Activated CD4-positive, alpha-beta T cell treated with anti-CD3 and anti-CD28 coated beads for 36 hours (primary cell): ENCODE measurements at regions of chr10 and their contacts with region 1.

Region 1: DNA sequence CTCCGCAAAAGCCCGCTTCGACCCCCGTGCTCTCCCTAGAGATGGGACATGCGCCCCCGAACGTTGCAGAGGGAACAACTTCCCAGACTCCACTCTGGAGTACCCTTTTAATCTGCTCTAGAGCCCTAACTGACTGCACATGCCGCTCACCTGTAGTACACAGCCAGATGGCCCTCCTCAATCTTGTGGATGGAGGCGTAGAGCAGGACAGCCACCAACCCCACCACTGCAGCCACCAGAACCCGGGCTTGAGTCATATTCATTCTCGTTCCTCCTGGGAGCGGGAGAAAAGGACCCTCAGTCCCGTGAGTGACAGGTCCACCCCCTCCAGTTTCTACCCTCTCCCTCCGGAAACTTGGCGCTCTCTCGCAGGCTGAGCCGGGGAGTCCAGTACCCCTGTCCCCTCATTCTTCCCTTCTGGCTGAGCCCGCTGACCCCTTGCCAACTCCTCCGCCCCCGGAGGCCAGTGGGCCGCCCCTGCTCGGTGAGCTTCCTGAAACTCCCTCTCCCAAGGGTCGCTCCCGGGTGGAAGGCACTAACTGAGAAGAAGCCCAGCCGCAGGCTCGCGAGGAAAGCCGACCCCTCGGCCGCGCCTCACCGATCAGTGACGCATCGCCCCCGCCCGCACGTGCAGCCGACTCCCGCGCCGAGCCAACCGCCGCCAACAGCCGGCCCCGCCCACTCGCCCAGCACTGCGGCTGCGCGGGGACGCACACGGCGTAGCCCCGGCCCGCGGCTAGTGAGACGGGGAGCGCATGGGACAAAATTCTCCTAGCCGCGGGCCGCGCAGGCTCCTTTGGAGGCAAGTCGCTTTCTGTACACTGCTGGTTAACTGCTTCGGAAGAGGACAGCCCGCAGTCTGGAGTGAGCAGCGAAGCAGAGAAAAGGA is at the start of gene ERLIN1:
- DNase-seq: peak; percentile 97
- ATAC-seq: peak; percentile 90
- H3K4me3 Mint-ChIP-seq: peak within 1 kb of the TSS; percentile 97
- H3K27ac Mint-ChIP-seq: peak within 1 kb of the TSS; percentile 97
- H3K4me1 Mint-ChIP-seq: peaks cover 48% of the 10 kb centered on the region
- H3K27me3 Mint-ChIP-seq: no peaks in the 10 kb centered on the region
- total RNA-seq, gene ERLIN1: 15.2 to 18.7 TPM

Region 2: DNA sequence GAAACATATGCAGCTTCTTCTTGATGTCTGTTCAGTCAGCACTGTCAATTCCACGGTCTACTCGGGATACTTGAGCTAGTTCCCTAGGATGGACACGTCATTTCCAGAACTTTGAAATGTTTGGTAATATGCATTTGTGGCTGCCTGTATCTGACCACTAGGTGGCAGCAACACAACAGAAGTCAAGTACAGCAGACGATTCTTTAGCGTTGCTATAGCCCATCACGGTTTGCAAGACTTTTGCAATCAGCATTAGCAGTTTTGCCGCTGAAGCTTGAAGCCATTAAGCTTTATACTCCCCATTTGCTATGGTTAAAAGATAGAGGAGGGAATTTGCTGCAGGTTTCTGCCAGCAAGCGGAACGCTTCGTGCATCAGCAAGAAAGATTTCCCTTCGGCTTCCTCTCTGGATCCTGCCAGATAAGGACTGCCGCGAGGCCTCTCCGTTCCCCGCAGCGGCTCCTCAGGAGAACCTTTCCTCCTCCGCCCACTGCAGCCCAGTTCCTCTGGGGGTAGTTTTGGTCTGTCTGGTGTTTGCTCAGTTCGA is 339.7 kb before region 1 on chr10:
- CTCF ChIA-PET with region 1: no interaction called
- POLR2A ChIA-PET with region 1: no interaction called
- intact Hi-C with region 1: loop called in 1 of 2 experiments (anchors 5 kb)
- DNase-seq: peak; percentile 81
- ATAC-seq: peak; percentile 95
- H3K4me3 Mint-ChIP-seq: no peak overlapping the region
- H3K27ac Mint-ChIP-seq: no peak overlapping the region
- H3K4me1 Mint-ChIP-seq: peaks cover 3% of the 10 kb centered on the region
- H3K27me3 Mint-ChIP-seq: no peaks in the 10 kb centered on the region

Region 3: DNA sequence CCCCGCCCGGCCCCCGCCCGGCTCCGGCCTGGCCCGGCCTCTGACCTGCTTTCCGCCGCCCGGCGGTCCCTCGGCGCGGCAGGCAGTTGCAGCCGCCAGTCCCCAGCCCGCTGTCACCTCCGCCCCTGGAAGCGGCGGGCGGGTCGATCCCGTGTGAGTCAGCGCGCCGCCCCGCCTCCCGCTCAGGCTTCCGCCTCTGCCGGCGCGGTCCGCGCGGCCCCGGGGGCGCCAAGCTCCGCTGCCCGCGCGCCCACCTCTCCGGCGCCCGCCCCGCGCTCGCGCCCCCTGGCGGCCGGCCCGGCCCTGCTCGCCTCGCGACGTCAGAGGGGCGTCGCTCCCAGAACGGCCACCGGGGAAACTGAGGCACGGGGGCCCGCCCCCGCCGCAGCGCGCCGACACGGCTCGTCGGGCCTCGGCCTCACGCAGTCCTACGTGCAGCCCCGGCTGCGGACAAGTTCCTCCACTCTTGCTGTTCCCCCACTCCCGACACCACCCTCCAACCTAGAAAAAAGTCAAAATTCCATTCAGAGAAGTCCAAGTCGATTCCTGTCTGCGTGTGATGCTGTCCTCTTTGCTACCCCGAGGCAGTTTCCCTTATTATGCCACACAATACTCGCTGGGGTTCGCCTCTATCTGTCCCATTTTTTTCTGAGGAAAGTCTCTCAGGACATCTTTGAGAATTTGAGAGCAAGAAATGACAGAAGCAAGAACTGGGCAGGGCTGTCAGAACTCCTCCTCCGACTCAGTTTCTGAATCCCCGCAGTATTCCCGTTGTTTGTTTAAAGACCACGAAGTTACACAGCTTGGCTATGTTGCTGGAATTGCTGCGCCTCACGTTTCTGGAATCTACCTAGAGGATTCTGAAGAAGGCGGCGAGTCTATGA is 175.6 kb before region 1 on chr10 and contains the start of gene DNMBP:
- CTCF ChIA-PET with region 1: no interaction called
- POLR2A ChIA-PET with region 1: no interaction called
- intact Hi-C with region 1: loop called in 1 of 2 experiments (anchors 2 kb)
- DNase-seq: peak; percentile 91
- ATAC-seq: peak; percentile 91
- H3K4me3 Mint-ChIP-seq: peak within 1 kb of the TSS; percentile 74
- H3K27ac Mint-ChIP-seq: peak within 1 kb of the TSS; percentile 79
- H3K4me1 Mint-ChIP-seq: peaks cover 46% of the 10 kb centered on the region
- H3K27me3 Mint-ChIP-seq: peaks cover 8% of the 10 kb centered on the region
- total RNA-seq, gene DNMBP: 1.9 to 2.4 TPM

Region 4: DNA sequence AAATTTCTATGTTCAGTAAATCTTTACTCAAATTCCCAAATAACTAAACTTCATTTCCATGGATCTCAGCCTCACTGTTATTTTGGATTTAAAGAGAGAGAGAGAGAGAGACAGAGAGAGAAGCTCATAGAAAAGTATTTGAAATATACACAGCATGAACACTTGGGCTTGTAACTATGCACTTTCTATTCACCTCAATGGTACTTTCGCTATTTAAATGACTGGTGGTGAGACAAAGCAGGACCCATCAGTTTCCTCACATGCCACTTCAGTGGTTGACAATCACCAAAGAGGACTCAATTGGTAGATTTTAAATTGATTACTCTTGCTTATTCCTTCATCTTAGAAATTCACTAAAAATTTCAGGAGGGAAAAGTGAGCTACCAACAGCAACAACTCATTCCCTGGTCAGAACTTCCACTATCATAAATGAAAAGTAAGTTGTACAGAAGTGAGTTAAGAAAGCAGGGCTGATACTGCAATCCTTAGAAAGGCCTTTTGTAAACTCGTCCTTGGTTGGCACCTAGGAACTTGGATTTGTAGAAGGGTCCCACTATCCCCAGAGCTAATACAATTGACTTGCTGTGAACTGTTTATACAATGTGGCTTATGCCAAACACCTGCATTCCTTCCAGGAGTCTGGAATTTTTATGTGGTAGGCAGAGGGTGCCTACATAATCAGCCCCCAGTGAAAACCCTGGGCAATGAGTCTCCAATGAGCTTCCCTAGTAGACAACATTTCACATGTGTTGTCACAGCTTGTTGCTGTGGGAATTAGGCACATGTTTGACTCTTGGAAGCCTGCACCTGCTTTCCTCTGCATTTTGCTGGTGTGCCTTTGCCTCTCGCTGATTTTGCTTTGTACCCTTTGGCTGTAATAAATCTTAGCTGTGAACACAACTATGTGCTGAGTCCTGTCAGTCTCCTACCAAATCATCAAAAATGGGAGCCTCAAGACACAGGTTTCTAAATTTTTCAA is 10.6 kb before region 1 on chr10:
- CTCF ChIA-PET with region 1: interaction called, 9 read pairs
- POLR2A ChIA-PET with region 1: no interaction called
- intact Hi-C with region 1: loop called in 1 of 2 experiments (anchors 1 kb)
- DNase-seq: peak; percentile 21
- ATAC-seq: peak; percentile 98
- H3K4me3 Mint-ChIP-seq: no peak overlapping the region
- H3K27ac Mint-ChIP-seq: peak overlapping the region; percentile 7
- H3K4me1 Mint-ChIP-seq: peaks cover 43% of the 10 kb centered on the region
- H3K27me3 Mint-ChIP-seq: no peaks in the 10 kb centered on the region

Region 5: DNA sequence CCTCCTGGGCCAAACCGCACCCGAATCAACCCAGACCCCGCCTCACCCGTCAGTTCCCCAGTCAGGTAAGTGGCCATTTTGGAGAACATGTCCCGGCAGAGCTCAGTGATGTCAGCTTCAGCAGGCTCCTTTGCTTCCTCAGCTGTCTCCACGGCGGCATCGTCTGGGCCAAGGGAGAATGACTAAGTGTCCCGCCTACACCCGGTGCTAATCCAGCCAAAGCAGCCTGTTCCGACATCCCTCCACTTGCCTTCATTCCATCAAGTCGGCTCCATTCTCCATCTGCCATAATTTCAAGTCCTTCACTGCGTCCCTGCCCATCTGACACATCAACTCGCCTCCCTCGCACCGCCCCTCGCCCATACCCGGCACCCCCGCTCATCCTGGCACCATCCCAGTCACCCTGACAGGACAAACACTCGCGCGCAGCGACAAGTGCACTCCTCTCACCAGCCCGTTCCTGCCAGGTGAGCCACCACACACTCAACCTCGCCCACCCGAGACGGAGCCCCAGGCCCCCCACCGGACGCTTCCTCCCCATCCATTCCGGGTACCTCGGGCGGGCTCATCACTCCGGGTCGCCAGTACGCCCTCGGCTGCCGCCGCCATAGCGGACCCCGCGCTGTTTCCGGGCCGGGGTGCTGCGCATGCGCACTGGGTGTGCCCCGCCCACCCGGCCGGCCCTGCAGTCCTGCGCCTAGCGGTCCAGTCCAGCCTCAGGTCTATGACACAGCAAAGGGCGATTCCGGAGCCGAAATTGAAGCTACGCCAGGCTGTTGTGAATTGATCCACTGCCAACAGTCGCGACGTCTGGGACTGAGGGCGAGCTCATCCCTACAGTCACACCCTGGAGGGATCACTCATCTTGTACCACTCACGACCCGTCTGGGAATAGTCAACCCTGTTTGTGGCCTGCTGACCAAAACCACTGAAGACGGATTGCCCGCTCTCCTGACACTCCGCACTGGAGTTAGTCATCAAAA is 100.7 kb after region 1 on chr10 and contains the start of gene BLOC1S2:
- CTCF ChIA-PET with region 1: no interaction called
- POLR2A ChIA-PET with region 1: no interaction called
- intact Hi-C with region 1: loop called in 1 of 2 experiments (anchors 1 kb)
- DNase-seq: peak; percentile 91
- ATAC-seq: peak; percentile 89
- H3K4me3 Mint-ChIP-seq: peak within 1 kb of the TSS; percentile 100
- H3K27ac Mint-ChIP-seq: peak within 1 kb of the TSS; percentile 100
- H3K4me1 Mint-ChIP-seq: peaks cover 24% of the 10 kb centered on the region
- H3K27me3 Mint-ChIP-seq: no peaks in the 10 kb centered on the region
- total RNA-seq, gene BLOC1S2: 45.0 to 45.7 TPM

Region 6: GRCh38 chr10:100362570-100363496 is 177.2 kb after region 1 on chr10:
- CTCF ChIA-PET with region 1: no interaction called
- POLR2A ChIA-PET with region 1: no interaction called
- intact Hi-C with region 1: no loop called
- DNase-seq: no peak
- ATAC-seq: no peak
- H3K4me3 Mint-ChIP-seq: no peak overlapping the region
- H3K27ac Mint-ChIP-seq: peak overlapping the region; percentile 14
- H3K4me1 Mint-ChIP-seq: peaks cover 16% of the 10 kb centered on the region
- H3K27me3 Mint-ChIP-seq: no peaks in the 10 kb centered on the region

Region 7: DNA sequence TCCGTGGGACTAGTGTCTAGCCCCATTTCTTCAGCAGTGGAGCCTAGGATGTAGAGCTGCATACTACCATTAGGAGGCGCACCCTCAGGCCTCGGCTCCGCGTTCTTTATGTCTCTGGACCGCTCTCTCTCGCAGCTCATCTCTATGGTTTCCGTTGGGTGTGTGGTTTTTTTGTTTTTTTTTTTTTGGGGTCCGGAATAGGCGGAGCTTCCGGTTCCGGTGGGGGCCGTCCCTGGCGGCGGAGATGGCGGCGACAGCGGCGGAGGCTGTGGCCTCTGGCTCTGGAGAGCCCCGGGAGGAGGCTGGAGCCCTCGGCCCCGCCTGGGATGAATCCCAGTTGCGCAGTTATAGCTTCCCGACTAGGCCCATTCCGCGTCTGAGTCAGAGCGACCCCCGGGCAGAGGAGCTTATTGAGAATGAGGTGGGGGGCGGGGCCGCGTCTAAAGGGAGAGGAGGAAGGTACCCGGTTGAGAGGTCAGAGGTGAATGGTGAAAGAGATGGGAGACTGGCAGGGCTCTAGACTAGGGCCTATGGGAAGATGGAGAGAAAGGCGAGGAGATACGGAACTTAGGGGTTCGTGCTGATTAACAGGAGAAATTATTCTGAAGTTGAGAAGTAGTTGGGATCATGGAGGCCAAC is 350.2 kb after region 1 on chr10 and contains the start of gene HIF1AN:
- CTCF ChIA-PET with region 1: no interaction called
- POLR2A ChIA-PET with region 1: no interaction called
- intact Hi-C with region 1: loop called in 1 of 2 experiments (anchors 2 kb)
- DNase-seq: peak; percentile 93
- ATAC-seq: peak; percentile 96
- H3K4me3 Mint-ChIP-seq: no peak within 1 kb of the TSS
- H3K27ac Mint-ChIP-seq: no peak within 1 kb of the TSS
- H3K4me1 Mint-ChIP-seq: peaks cover 27% of the 10 kb centered on the region
- H3K27me3 Mint-ChIP-seq: no peaks in the 10 kb centered on the region
- total RNA-seq, gene HIF1AN: 45.9 to 50.8 TPM

Region 8: GRCh38 chr10:100982951-100983830 is 797.6 kb after region 1 on chr10:
- CTCF ChIA-PET with region 1: no interaction called
- POLR2A ChIA-PET with region 1: no interaction called
- intact Hi-C with region 1: no loop called
- DNase-seq: no peak
- ATAC-seq: no peak
- H3K4me3 Mint-ChIP-seq: no peak overlapping the region
- H3K27ac Mint-ChIP-seq: no peak overlapping the region
- H3K4me1 Mint-ChIP-seq: peaks cover 19% of the 10 kb centered on the region
- H3K27me3 Mint-ChIP-seq: no peaks in the 10 kb centered on the region